ENCODE measurements at regions of chr6 and their contacts with region 1.

Region 1: DNA sequence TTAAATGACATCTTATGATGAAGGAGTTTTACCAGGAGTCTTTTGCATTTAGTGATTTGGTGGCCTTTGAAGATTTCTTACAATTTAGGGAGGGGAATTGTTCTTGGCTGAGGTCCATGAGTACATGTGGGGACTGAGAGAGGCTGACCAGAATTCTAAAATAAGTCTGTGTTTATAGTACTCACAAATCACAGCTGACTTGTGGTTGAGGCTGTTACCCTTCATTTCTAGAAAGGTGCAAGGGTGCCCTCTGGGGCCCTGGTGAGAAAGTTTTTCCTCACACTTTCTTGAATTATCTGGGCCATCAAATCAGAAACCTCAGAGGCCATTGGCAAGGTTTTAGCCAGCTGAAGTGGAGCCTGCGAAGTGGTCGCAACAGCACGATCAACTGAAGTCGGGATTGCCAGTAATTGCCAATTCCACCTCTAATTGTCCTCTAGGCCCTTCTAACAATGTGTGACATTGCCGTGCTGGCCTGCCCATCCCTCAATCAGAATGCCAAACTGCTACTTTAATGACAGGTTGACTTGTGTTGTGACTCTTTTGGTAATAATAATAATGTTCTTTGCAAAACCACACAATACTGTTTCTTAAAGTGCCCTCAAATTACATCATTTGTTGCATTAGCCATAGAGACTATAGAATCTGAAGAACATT is 221.6 kb downstream of the OGFRL1 start:
- DNase-seq: peak in 2 of 3 donors; percentile 28 to 40
- ATAC-seq: peak; percentile 32
- H3K4me3 ChIP-seq: no peak overlapping the region
- H3K4me1 ChIP-seq: no peaks in the 10 kb centered on the region
- CTCF ChIP-seq: peak; percentile 10

Region 2: DNA sequence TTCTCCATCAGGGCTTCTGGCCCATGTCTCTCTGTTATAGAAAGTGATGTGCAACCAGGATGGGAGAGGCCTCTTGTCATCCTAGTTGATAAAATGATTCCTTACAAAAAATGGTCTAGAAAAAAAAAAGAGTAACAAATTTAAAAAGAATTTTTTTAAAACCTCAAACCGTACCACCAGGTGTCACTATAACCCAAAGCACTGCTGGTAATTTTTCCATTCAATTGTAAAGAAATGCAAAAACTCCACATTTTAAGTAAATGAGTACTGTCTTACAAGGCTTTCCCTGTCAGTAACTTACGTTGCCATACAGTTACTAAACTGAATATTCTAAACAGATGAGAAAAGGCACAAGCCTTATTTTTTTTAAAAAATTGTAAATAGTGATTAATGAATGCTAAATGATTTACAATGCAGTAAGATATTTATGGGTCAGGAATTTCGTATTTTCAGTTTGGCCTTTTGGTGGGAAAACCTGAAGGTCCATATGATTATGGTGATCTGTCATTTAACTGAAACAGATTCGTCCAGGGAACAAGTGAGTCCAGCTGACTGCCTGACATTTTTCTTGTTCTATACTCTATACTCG is 126.2 kb before region 1 on chr6:
- intact Hi-C with region 1: loop called (anchors 5 to 10 kb)
- DNase-seq: peak in 1 of 3 donors; percentile 22
- ATAC-seq: no peak
- H3K4me3 ChIP-seq: no peak overlapping the region
- H3K4me1 ChIP-seq: no peaks in the 10 kb centered on the region
- CTCF ChIP-seq: no peak

Region 3: GRCh38 chr6:71433441-71433840 is 76.7 kb before region 1 on chr6:
- intact Hi-C with region 1: no loop called
- DNase-seq: no peak
- ATAC-seq: no peak
- H3K4me3 ChIP-seq: no peak overlapping the region
- H3K4me1 ChIP-seq: no peaks in the 10 kb centered on the region
- CTCF ChIP-seq: no peak